ENCODE measurements at regions of chr4 and their contacts with region 1.

Region 1: DNA sequence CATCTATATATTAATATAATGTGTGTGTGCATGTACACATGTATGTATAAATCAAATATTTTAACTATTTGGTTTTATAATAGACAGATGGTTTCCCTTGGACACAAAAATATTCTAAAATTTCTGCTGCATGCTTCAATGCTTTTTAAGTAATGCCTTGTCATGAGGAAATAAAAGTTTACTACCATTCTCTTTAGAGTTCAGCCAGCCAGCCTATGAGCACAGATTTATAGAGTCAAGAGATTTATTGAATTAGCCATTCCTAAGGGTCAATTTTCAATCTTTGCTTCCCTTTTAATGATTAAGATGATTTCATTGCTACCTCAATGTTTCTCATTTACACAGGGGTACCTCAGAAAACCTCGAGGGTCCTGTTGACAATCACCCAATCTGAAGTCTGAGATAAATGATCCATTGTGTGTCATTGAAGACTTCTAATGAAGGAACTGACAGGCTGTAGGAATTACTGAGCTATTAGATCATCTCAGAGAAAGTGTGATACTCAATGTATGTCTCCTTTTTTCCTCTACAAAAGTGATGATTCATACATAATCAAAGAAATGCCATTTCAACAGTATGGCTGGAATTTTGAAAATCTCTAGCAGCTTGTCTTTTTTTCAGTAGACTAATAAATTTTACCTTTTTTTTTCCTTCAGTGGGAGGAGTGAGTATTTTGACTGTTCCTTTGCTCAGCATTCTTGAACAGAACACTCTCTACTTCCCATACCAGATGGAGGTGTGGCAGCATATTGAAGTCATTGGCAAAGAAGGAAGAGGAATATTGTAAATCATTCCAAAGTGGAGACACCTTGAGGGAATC is 222.6 kb upstream of the PCDH18 start:
- DNase-seq: no peak
- ATAC-seq: no peak
- H3K4me3 ChIP-seq: no peak overlapping the region
- H3K27ac ChIP-seq: no peak overlapping the region
- H3K4me1 ChIP-seq: no peaks in the 10 kb centered on the region
- H3K27me3 ChIP-seq: no peaks in the 10 kb centered on the region
- CTCF ChIP-seq: no peak
- EP300 ChIP-seq: no peak
- POLR2A ChIP-seq: no peak
- RAD21 ChIP-seq: no peak

Region 2: GRCh38 chr4:137300776-137301175 is 454.1 kb before region 1 on chr4:
- CTCF ChIA-PET with region 1: no interaction called
- POLR2A ChIA-PET with region 1: no interaction called
- in situ Hi-C with region 1: no loop called
- intact Hi-C with region 1: no loop called
- DNase-seq: no peak
- ATAC-seq: no peak
- H3K4me3 ChIP-seq: no peak overlapping the region
- H3K27ac ChIP-seq: no peak overlapping the region
- H3K4me1 ChIP-seq: no peaks in the 10 kb centered on the region
- H3K27me3 ChIP-seq: no peaks in the 10 kb centered on the region
- CTCF ChIP-seq: no peak
- EP300 ChIP-seq: no peak
- POLR2A ChIP-seq: no peak
- RAD21 ChIP-seq: no peak

Region 3: GRCh38 chr4:137694138-137694537 is 60.7 kb before region 1 on chr4:
- CTCF ChIA-PET with region 1: no interaction called
- POLR2A ChIA-PET with region 1: no interaction called
- in situ Hi-C with region 1: no loop called
- intact Hi-C with region 1: no loop called
- DNase-seq: no peak
- ATAC-seq: no peak
- H3K4me3 ChIP-seq: no peak overlapping the region
- H3K27ac ChIP-seq: no peak overlapping the region
- H3K4me1 ChIP-seq: no peaks in the 10 kb centered on the region
- H3K27me3 ChIP-seq: no peaks in the 10 kb centered on the region
- CTCF ChIP-seq: no peak
- EP300 ChIP-seq: no peak
- POLR2A ChIP-seq: no peak
- RAD21 ChIP-seq: no peak

Region 4: GRCh38 chr4:137775701-137776100 is 20.8 kb after region 1 on chr4:
- CTCF ChIA-PET with region 1: no interaction called
- POLR2A ChIA-PET with region 1: no interaction called
- in situ Hi-C with region 1: no loop called
- intact Hi-C with region 1: loop called (anchors 1 kb)
- DNase-seq: no peak
- ATAC-seq: no peak
- H3K4me3 ChIP-seq: no peak overlapping the region
- H3K27ac ChIP-seq: no peak overlapping the region
- H3K4me1 ChIP-seq: no peaks in the 10 kb centered on the region
- H3K27me3 ChIP-seq: no peaks in the 10 kb centered on the region
- CTCF ChIP-seq: no peak
- EP300 ChIP-seq: no peak
- POLR2A ChIP-seq: no peak
- RAD21 ChIP-seq: no peak

Region 5: DNA sequence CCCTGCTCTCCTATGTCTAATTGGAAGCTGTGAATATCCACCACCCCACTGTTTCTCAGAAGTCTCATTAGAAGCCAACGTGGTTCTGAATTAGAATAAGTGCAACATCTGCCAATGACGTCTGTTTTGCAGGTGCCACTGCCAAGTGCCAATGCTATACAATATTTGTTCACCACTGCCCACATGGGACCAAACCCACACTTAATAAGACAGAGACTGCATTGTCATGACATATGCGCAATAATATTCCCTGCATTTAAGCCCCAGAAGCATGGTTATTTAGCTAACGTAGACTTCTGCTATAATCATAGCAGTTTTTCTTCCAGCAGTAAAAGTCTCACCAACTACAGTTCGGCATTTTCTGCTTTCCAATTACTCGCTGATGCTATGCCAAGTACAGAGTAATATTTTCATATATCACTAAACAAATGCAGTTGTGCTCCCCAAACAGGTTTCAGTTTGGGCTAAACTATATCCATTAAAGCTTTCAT is 39.9 kb after region 1 on chr4:
- CTCF ChIA-PET with region 1: no interaction called
- POLR2A ChIA-PET with region 1: no interaction called
- in situ Hi-C with region 1: no loop called
- intact Hi-C with region 1: no loop called
- DNase-seq: no peak
- ATAC-seq: no peak
- H3K4me3 ChIP-seq: no peak overlapping the region
- H3K27ac ChIP-seq: no peak overlapping the region
- H3K4me1 ChIP-seq: no peaks in the 10 kb centered on the region
- H3K27me3 ChIP-seq: no peaks in the 10 kb centered on the region
- CTCF ChIP-seq: no peak
- EP300 ChIP-seq: no peak
- POLR2A ChIP-seq: no peak
- RAD21 ChIP-seq: no peak

Region 6: DNA sequence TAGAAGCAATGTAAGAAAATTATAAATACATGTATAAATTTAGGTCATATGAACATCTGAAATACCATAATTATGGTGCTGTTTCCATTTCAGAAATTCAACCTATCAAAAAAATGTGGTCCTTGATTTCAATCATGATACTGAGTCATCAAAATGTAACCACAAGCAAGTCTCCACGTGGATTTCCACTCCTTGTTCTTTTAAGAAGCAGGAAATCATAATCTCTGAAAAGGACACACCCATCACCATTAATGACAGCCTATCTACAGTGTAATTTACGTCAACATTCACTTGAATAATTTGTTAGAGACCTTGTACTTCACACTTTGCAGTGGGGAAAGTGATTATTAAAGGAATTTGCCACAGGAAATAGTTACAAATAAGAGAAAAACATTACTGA is 504.9 kb after region 1 on chr4:
- CTCF ChIA-PET with region 1: no interaction called
- POLR2A ChIA-PET with region 1: no interaction called
- in situ Hi-C with region 1: no loop called
- intact Hi-C with region 1: no loop called
- DNase-seq: no peak
- ATAC-seq: no peak
- H3K4me3 ChIP-seq: no peak overlapping the region
- H3K27ac ChIP-seq: no peak overlapping the region
- H3K4me1 ChIP-seq: peaks cover 32% of the 10 kb centered on the region
- H3K27me3 ChIP-seq: peaks cover 0 to 1% of the 10 kb centered on the region in 2 experiments; a peak in 1 of 5 replicates
- CTCF ChIP-seq: no peak
- EP300 ChIP-seq: no peak
- POLR2A ChIP-seq: no peak
- RAD21 ChIP-seq: no peak